Caco-2 (cell line): ENCODE measurements at regions of chr1 and their contacts with region 1.

Region 1: GRCh38 chr1:185559684-185560331 is 174.4 kb upstream of the HMCN1 start:
- DNase-seq: peak; percentile 39 to 45
- H3K4me3 ChIP-seq: no peak overlapping the region
- H3K4me3 Mint-ChIP-seq: no peak overlapping the region
- H3K27ac Mint-ChIP-seq: no peak overlapping the region
- H3K4me1 ChIP-seq: peaks cover 4% of the 10 kb centered on the region; the same call in 1 of the 2 replicates
- H3K4me1 Mint-ChIP-seq: peaks cover 11% of the 10 kb centered on the region
- H3K27me3 ChIP-seq: no peaks in the 10 kb centered on the region
- H3K27me3 Mint-ChIP-seq: no peaks in the 10 kb centered on the region
- CTCF ChIP-seq: peak in 1 of 2 experiments; percentile 41

Region 2: GRCh38 chr1:185546029-185546428 is 13.8 kb before region 1 on chr1:
- CTCF ChIA-PET with region 1: no interaction called
- POLR2A ChIA-PET with region 1: no interaction called
- intact Hi-C with region 1: no loop called
- DNase-seq: no peak
- H3K4me3 ChIP-seq: no peak overlapping the region
- H3K4me3 Mint-ChIP-seq: no peak overlapping the region
- H3K27ac Mint-ChIP-seq: no peak overlapping the region
- H3K4me1 ChIP-seq: peaks cover 24% of the 10 kb centered on the region
- H3K4me1 Mint-ChIP-seq: peaks cover 28% of the 10 kb centered on the region
- H3K27me3 ChIP-seq: no peaks in the 10 kb centered on the region
- H3K27me3 Mint-ChIP-seq: no peaks in the 10 kb centered on the region
- CTCF ChIP-seq: no peak

Region 3: DNA sequence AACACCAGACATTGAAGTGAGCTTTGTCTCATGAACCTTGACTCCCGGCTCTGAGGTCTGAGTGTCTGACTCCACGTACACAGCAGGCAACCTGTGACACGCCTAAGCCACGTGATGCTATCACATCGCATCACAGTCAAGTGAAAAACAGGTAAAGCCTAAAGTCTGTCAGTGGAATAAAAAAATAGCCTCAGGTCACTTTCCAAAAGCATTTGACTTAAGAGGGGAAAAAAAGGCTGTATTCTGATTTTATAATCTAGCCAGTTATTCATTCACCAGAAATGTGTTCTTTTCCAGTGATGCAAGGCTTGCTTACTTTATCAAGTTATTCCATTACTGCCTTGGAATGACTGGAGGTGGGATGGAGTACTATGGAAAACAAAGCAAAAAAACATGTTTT is 11.2 kb after region 1 on chr1:
- CTCF ChIA-PET with region 1: no interaction called
- POLR2A ChIA-PET with region 1: no interaction called
- intact Hi-C with region 1: loop called (anchors 1 kb)
- DNase-seq: no peak
- H3K4me3 ChIP-seq: no peak overlapping the region
- H3K4me3 Mint-ChIP-seq: no peak overlapping the region
- H3K27ac Mint-ChIP-seq: no peak overlapping the region
- H3K4me1 ChIP-seq: peaks cover 7% of the 10 kb centered on the region; the same call in 1 of the 2 replicates
- H3K4me1 Mint-ChIP-seq: peaks cover 3% of the 10 kb centered on the region
- H3K27me3 ChIP-seq: no peaks in the 10 kb centered on the region
- H3K27me3 Mint-ChIP-seq: no peaks in the 10 kb centered on the region
- CTCF ChIP-seq: no peak